PC-9 (cell line): ENCODE measurements at regions of chr20 and their contacts with region 1.

Region 1: DNA sequence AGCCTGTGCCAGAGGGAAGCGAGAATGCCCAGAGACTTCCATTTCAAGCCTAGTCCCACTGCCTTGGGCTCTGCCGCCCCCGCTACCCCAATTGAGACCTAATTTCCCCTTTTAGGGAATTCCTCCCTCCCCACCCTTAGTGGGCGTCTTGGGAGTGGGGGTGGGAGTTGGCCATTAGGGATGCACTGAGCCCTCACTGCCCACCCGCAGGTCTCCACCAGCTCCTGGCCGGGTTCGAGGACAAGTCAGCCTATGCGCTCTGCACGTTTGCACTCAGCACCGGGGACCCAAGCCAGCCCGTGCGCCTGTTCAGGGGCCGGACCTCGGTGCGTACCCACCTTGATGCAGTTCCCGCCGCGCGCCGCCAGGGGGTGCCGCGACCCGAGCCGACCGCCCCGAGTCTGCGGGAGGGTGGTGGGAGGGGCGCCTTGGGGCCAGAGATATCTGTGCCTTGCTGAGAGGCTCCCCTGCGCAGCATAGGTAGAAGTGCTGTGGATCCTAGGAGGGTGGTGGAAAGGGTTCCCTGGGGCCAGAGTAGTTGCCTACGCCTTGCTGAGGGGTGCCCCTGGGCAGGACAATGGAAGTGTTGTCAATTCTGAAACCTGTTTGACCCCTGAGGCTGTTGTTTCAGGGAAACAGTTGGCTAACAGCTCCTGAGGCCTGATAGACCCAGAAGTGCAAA is 9.2 kb downstream of the ITPA start:
- DNase-seq: peak; percentile 49 to 75
- H3K4me3 ChIP-seq: no peak overlapping the region
- H3K27ac ChIP-seq: no peak overlapping the region
- H3K4me1 ChIP-seq: peaks cover 15% of the 10 kb centered on the region; the same call in 1 of the 2 replicates
- H3K27me3 ChIP-seq: no peaks in the 10 kb centered on the region
- CTCF ChIP-seq: peak; percentile 93

Region 2: DNA sequence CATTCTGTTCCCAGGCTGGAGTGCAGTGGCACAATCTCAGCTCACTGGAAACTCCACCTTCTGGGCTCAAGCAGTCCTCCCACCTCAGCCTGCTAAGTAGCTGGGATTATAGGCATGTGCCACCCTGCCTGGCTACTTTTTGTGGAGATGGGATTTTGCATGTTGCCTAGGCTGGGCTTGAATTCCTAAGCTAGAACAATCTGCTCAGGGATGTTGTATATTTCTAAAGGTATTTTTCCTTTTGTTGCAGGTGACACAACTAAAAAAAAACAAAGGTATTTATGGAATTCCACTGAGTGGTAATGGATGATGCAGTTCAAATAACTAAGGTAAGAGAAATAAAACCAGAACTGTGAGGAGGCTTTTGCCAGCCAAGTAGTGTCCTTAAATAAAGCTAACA is 295.5 kb before region 1 on chr20:
- CTCF ChIA-PET with region 1: no interaction called
- POLR2A ChIA-PET with region 1: interaction called, 28 read pairs
- intact Hi-C with region 1: no loop called
- DNase-seq: peak; percentile 56 to 68
- H3K4me3 ChIP-seq: no peak overlapping the region
- H3K27ac ChIP-seq: peak overlapping the region; percentile 12; the same call in 1 of the 2 replicates
- H3K4me1 ChIP-seq: peaks cover 24% of the 10 kb centered on the region
- H3K27me3 ChIP-seq: no peaks in the 10 kb centered on the region
- CTCF ChIP-seq: no peak

Region 3: GRCh38 chr20:3115190-3116107 is 103.0 kb before region 1 on chr20:
- CTCF ChIA-PET with region 1: no interaction called
- POLR2A ChIA-PET with region 1: no interaction called
- intact Hi-C with region 1: no loop called
- DNase-seq: peak; percentile 33 to 46
- H3K4me3 ChIP-seq: no peak overlapping the region
- H3K27ac ChIP-seq: no peak overlapping the region
- H3K4me1 ChIP-seq: no peaks in the 10 kb centered on the region
- H3K27me3 ChIP-seq: no peaks in the 10 kb centered on the region
- CTCF ChIP-seq: peak; percentile 81

Region 4: DNA sequence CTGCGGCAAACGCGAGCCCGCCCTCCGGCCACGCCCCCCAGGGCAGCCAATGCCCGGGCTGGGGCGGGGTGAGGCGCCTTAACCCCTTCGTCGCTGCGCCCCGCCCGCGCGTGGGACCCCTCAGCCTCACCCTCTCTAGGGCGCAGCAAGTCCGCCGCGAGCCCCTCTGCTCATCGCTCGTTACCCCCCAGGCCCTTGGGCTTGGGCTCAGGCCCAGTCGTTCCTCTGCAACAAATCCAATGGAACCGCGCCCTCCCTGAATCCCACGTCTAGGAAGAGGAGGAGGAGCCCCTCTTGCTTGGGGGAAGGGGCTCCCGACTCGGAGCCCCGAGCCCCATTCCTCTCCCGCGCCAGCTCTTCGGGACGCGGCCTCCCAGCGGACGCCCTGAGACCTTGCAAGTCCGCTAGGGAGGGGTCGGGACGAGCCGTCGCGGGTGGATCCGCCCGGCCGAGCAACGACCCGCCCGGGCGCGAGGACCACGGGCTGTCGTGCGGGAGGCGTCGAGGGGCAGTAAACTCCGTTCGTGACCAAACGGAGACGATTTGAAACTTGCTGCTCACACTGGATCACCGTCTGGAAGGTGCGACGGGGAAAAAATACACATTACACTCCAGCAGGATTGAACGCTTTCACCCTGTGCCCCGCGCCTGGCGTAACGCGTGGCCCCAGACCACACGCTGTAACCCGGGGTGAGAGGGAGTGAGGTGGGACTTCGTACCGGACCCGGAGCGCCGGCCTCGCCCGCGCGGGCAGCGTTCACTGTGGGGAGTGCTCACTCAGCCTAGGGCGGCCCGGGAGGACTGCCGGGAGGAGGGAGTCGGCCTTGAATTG is 44.6 kb before region 1 on chr20:
- CTCF ChIA-PET with region 1: no interaction called
- POLR2A ChIA-PET with region 1: interaction called, 19 read pairs
- intact Hi-C with region 1: no loop called
- DNase-seq: peak; percentile 46 to 88
- H3K4me3 ChIP-seq: peak overlapping the region; percentile 99
- H3K27ac ChIP-seq: no peak overlapping the region
- H3K4me1 ChIP-seq: peaks cover 13% of the 10 kb centered on the region
- H3K27me3 ChIP-seq: no peaks in the 10 kb centered on the region
- CTCF ChIP-seq: no peak

Region 5: GRCh38 chr20:3250091-3250504 is 31.6 kb after region 1 on chr20:
- CTCF ChIA-PET with region 1: interaction called, 8 read pairs
- POLR2A ChIA-PET with region 1: no interaction called
- intact Hi-C with region 1: loop called (anchors 1 kb)
- DNase-seq: peak in 1 of 2 experiments; percentile 34
- H3K4me3 ChIP-seq: no peak overlapping the region
- H3K27ac ChIP-seq: no peak overlapping the region
- H3K4me1 ChIP-seq: no peaks in the 10 kb centered on the region
- H3K27me3 ChIP-seq: no peaks in the 10 kb centered on the region
- CTCF ChIP-seq: peak; percentile 61

Region 6: GRCh38 chr20:3276680-3277015 is 58.2 kb after region 1 on chr20:
- CTCF ChIA-PET with region 1: interaction called, 3 read pairs
- POLR2A ChIA-PET with region 1: interaction called, 6 read pairs
- intact Hi-C with region 1: loop called (anchors 1 kb)
- DNase-seq: peak in 1 of 2 experiments; percentile 36
- H3K4me3 ChIP-seq: no peak overlapping the region
- H3K27ac ChIP-seq: no peak overlapping the region
- H3K4me1 ChIP-seq: no peaks in the 10 kb centered on the region
- H3K27me3 ChIP-seq: no peaks in the 10 kb centered on the region
- CTCF ChIP-seq: peak; percentile 65

Region 7: GRCh38 chr20:3371754-3372153 is 153.3 kb after region 1 on chr20:
- CTCF ChIA-PET with region 1: interaction called, 10 read pairs
- POLR2A ChIA-PET with region 1: no interaction called
- intact Hi-C with region 1: no loop called
- DNase-seq: no peak
- H3K4me3 ChIP-seq: no peak overlapping the region
- H3K27ac ChIP-seq: no peak overlapping the region
- H3K4me1 ChIP-seq: no peaks in the 10 kb centered on the region
- H3K27me3 ChIP-seq: no peaks in the 10 kb centered on the region
- CTCF ChIP-seq: no peak

Region 8: GRCh38 chr20:3420211-3420707 is 201.8 kb after region 1 on chr20:
- CTCF ChIA-PET with region 1: no interaction called
- POLR2A ChIA-PET with region 1: no interaction called
- intact Hi-C with region 1: no loop called
- DNase-seq: no peak
- H3K4me3 ChIP-seq: no peak overlapping the region
- H3K27ac ChIP-seq: no peak overlapping the region
- H3K4me1 ChIP-seq: no peaks in the 10 kb centered on the region
- H3K27me3 ChIP-seq: no peaks in the 10 kb centered on the region
- CTCF ChIP-seq: no peak

Region 9: GRCh38 chr20:3539311-3540107 is 321.1 kb after region 1 on chr20:
- CTCF ChIA-PET with region 1: no interaction called
- POLR2A ChIA-PET with region 1: no interaction called
- intact Hi-C with region 1: no loop called
- DNase-seq: no peak
- H3K4me3 ChIP-seq: no peak overlapping the region
- H3K27ac ChIP-seq: no peak overlapping the region
- H3K4me1 ChIP-seq: no peaks in the 10 kb centered on the region
- H3K27me3 ChIP-seq: no peaks in the 10 kb centered on the region
- CTCF ChIP-seq: no peak